ENCODE measurements at regions of chr6 and their contacts with region 1.

Region 1: DNA sequence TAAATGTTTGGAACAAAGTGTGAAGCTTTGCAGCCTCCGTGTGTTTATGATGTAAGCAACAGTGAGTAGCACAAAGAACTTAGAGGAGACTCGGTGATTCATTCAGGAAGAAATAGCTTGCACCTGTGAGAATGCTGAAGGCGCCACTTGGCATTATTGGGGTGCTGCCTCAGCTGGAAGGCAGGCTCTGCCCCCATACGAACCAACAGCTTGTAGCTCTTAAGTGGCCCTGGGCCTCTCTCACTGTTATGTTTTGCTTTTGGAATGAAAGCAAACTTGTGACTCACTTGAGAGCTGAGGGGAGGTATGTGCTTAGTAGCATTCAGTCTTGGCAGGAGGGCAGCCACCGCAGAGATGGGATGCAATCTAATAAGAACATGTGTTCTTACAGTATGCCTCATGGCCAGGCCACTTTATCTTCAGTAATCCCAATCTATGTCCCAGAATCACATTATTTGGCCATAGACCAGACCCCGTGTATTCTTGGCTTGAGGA is 310.7 kb downstream of the EYA4 start:
- DNase-seq: no peak
- H3K4me3 ChIP-seq: no peak overlapping the region
- H3K27ac ChIP-seq: no peak overlapping the region
- H3K4me1 ChIP-seq: 0 out of 4 replicates have a peak, but pooled peaks cover 0 to 5% of the 10 kb centered on the region in 2 experiments
- H3K27me3 ChIP-seq: no peaks in the 10 kb centered on the region
- CTCF ChIP-seq: no peak
- EP300 ChIP-seq: peak in 1 of 2 experiments; percentile 13; a peak in 1 of 4 replicates
- RAD21 ChIP-seq: no peak

Region 2: GRCh38 chr6:133314947-133315346 is 236.9 kb before region 1 on chr6:
- CTCF ChIA-PET with region 1: no interaction called
- POLR2A ChIA-PET with region 1: no interaction called
- DNase-seq: no peak
- H3K4me3 ChIP-seq: no peak overlapping the region
- H3K27ac ChIP-seq: no peak overlapping the region
- H3K4me1 ChIP-seq: no peaks in the 10 kb centered on the region
- H3K27me3 ChIP-seq: no peaks in the 10 kb centered on the region
- CTCF ChIP-seq: no peak
- EP300 ChIP-seq: no peak
- RAD21 ChIP-seq: no peak

Region 3: GRCh38 chr6:133368664-133369063 is 183.2 kb before region 1 on chr6:
- CTCF ChIA-PET with region 1: no interaction called
- POLR2A ChIA-PET with region 1: no interaction called
- DNase-seq: peak; percentile 15
- H3K4me3 ChIP-seq: no peak overlapping the region
- H3K27ac ChIP-seq: no peak overlapping the region
- H3K4me1 ChIP-seq: no peaks in the 10 kb centered on the region
- H3K27me3 ChIP-seq: peaks cover 6% of the 10 kb centered on the region
- CTCF ChIP-seq: no peak
- EP300 ChIP-seq: no peak
- RAD21 ChIP-seq: peak; percentile 53

Region 4: GRCh38 chr6:133568970-133569889 is 17.3 kb after region 1 on chr6:
- CTCF ChIA-PET with region 1: interaction called, 10 read pairs
- POLR2A ChIA-PET with region 1: no interaction called
- DNase-seq: peak; percentile 50
- H3K4me3 ChIP-seq: peak overlapping the region; percentile 35 to 52; a peak in 3 of 4 replicates
- H3K27ac ChIP-seq: no peak overlapping the region
- H3K4me1 ChIP-seq: peaks cover 0 to 5% of the 10 kb centered on the region in 2 experiments; a peak in 2 of 4 replicates
- H3K27me3 ChIP-seq: peaks cover 13% of the 10 kb centered on the region; the same call in 1 of the 2 replicates
- CTCF ChIP-seq: peak; percentile 95
- EP300 ChIP-seq: no peak
- RAD21 ChIP-seq: peak; percentile 61